ENCODE measurements at regions of chr3 and their contacts with region 1.

Region 1: DNA sequence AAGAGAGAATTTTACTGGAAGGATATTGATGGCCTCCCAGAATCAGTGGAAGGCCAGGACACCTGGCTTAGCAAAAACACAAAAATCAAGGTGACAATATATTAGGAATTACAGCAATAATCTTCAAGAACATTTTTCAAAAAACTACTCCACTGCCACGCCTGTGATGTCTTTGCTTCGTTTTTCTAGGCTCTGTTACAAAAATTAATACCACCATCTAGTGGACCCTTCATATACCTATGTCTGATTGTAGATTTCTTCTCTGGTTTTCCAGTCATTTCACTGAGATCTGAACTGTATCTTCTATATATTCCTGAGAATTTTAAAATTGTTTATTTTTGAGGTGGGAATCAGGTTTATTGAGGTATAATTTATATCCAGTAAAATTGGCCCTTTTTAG is 5.6 kb upstream of the SLC33A1 start:
- DNase-seq: no peak
- ATAC-seq: peak; percentile 65 to 90 (median 78)
- H3K4me3 ChIP-seq: no peak overlapping the region
- H3K27ac ChIP-seq: no peak overlapping the region
- H3K4me1 ChIP-seq: no peaks in the 10 kb centered on the region
- H3K27me3 ChIP-seq: no peaks in the 10 kb centered on the region
- CTCF ChIP-seq: peak in 2 of 4 donors; percentile 18

Region 2: DNA sequence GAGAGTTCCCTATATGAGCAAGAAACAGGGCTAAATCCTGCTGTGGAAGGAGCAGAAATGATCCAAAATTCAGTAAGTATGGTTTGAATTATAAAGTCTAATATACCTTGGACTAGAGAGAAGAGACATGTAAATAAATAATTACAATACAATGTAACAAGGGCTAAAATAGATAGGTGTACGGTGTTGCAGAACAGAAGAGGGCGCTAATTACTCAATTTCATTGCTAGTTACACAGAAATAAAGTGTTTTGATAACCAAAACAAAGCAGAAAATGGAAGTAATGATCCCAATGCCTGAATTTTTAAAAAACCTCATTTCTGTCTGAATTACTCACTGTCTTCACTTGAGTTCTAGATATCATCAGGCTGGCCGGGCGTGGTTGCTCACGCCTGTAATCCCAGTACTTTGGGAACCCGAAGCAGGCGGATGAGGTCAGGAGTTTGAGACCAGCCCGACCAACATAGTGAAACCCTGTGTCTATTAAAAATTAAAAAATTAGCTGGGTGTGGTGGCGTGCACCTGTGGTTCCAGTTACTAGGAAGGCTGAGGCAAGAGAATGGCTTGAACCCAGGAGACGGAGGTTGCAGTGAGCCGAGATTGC is 106.7 kb before region 1 on chr3:
- intact Hi-C with region 1: loop called in 1 of 3 experiments (anchors 10 kb)
- DNase-seq: no peak
- ATAC-seq: peak in 3 of 4 donors; percentile 57 to 76 (median 73)
- H3K4me3 ChIP-seq: no peak overlapping the region
- H3K27ac ChIP-seq: no peak overlapping the region
- H3K4me1 ChIP-seq: no peaks in the 10 kb centered on the region
- H3K27me3 ChIP-seq: no peaks in the 10 kb centered on the region
- CTCF ChIP-seq: peak in 2 of 4 donors; percentile 18 to 24

Region 3: DNA sequence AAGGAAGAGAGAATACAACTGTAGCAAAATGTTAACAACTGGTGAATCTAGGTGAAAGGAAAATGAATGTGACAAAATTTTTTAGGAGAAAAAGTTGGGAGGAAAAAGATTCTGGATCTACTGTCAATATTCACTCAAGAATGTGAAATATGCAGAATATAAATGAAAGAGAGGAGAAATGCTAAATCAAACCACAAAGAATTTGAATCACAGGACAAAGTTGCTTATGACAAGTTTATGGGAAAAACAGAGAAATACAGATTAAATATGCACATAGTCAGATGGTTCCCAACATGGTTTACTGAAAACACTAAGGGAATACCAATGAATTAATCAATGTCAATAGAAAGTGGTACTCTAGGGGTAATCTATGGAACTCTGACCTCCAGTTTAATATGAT is 81.4 kb before region 1 on chr3:
- intact Hi-C with region 1: no loop called
- DNase-seq: no peak
- ATAC-seq: no peak
- H3K4me3 ChIP-seq: no peak overlapping the region
- H3K27ac ChIP-seq: no peak overlapping the region
- H3K4me1 ChIP-seq: no peaks in the 10 kb centered on the region
- H3K27me3 ChIP-seq: no peaks in the 10 kb centered on the region
- CTCF ChIP-seq: no peak

Region 4: DNA sequence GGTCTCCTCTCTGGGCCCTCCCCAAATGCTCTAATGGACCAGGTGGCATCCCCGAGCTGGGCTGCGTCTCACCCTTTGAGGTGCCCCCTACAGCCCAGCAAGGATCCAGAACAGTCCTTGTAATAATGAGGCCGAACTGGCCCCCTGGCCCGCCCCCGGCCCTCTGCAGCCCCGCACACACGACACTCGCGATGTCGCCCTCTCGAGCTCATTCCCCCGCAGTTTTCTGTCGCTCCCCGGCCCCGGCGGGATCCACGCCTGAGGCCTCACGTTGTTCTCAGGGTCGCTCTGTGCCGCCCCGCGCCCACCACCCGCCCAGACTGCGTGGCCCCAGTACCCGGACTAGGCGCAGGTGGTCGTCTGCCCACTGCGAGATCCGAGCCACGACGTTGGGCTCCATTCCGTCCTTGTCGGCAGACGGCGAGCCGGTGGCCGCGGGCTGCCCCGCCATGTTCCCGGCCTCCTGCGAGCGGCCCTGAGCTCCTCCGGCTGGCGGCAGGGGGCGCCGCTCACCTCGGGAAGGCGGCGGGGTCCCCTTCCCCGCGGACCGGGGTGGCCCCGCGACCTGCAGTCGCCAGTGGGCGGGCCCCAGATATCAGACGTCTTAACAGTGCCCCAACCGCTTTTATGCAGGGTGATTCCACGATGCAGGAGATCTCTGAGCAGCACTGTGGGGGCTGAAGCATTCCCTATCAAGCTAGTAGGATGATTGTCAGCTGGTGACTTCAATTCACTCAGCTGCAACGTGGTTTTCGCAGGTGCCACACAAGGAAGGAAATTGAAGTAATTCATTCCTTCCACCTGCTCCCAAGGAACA is 53.8 kb before region 1 on chr3 and contains the start of gene C3orf33:
- intact Hi-C with region 1: loop called in 1 of 3 experiments (anchors 10 kb)
- DNase-seq: peak; percentile 69 to 91 (median 78)
- ATAC-seq: peak; percentile 95 to 99 (median 97)
- H3K4me3 ChIP-seq: peak within 1 kb of the TSS; percentile 72 to 83 (median 74)
- H3K27ac ChIP-seq: peak within 1 kb of the TSS; percentile 83 to 89 (median 86)
- H3K4me1 ChIP-seq: peaks cover 0 to 4% (median 3%) of the 10 kb centered on the region in 3 donors
- H3K27me3 ChIP-seq: no peaks in the 10 kb centered on the region
- CTCF ChIP-seq: peak; percentile 68 to 87 (median 82)
- total RNA-seq, gene C3orf33: 1.7 to 3.9 (median 3.3) TPM

Measured in pancreas (tissue), 10 donors.